Dorsolateral prefrontal cortex (tissue), 120 donors: ENCODE measurements at regions of chr4 and their contacts with region 1.

Region 1: DNA sequence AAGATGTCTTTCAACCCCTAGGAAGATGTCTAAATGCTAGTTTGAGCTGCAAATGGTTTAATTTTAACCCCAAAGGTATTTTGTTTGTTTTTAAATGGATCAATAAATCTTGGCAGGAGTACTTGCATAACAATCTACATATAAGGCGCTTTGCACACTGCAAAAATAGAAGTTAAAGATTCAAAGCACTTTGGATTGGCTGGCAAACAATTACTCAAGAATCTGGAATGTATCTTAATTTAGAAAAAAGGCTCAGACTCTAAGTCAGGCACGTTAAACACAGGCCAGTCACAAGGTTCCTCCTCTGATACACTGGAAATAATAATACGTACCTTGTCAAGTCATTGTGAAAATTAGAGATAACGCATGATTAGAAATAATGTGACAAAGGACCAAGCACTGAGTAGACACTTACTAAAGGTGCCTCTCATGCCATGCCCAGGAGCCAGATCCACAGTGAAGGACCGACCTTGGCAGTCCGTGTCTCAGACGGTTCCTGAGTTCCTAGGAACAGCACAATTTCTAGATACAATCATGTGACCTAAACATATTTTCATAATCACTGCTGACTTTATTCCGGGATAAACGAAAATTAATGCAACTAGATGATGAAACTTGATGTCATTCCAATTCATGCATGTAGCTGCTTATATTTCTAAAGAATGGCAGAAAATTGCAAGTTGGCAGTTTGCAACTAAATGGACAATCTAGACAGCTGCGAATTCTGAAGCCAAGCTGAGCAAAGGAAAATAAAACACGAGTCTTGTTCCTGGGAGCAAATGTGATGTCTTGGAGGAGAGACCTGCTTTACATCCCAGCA is 49.6 kb downstream of the PROM1 start:
- DNase-seq: no peak
- H3K4me3 ChIP-seq: no peak overlapping the region
- H3K27ac ChIP-seq: peak overlapping the region in 2 of 59 donors; percentile 11 to 16
- H3K27me3 ChIP-seq: no peaks in the 10 kb centered on the region
- CTCF ChIP-seq: no peak

Region 2: DNA sequence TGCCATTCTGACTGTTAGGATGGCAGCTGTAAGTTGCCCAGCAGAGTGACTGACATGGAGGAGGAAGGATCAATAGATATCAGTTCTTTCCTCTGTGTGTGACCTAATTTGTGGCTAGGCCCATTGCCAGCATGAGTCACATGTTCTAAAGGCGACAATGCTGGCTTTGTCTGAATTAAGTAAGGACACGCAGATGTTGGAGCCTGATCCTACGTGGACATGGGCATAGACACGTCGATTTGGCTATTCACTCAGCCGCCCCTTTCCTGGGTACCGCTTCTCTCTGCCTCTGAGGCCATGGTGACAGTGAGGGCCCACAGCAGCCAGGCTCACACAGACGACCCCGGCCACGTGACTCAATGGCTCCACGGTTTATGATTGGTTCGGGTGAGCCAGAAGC is 33.3 kb after region 1 on chr4:
- intact Hi-C with region 1: loop called in 1 of 2 experiments (anchors 5 kb)
- DNase-seq: peak in 7 of 10 donors; percentile 35 to 85 (median 59)
- H3K4me3 ChIP-seq: peak overlapping the region in 5 of 59 donors; percentile 2 to 25 (median 9)
- H3K27ac ChIP-seq: peak overlapping the region in 58 of 59 donors; percentile 12 to 92 (median 79)
- H3K27me3 ChIP-seq: peaks cover 0 to under 1% (median 0%) of the 10 kb centered on the region in 45 donors
- CTCF ChIP-seq: no peak